ENCODE measurements at regions of chr5 and their contacts with region 1.

Region 1: DNA sequence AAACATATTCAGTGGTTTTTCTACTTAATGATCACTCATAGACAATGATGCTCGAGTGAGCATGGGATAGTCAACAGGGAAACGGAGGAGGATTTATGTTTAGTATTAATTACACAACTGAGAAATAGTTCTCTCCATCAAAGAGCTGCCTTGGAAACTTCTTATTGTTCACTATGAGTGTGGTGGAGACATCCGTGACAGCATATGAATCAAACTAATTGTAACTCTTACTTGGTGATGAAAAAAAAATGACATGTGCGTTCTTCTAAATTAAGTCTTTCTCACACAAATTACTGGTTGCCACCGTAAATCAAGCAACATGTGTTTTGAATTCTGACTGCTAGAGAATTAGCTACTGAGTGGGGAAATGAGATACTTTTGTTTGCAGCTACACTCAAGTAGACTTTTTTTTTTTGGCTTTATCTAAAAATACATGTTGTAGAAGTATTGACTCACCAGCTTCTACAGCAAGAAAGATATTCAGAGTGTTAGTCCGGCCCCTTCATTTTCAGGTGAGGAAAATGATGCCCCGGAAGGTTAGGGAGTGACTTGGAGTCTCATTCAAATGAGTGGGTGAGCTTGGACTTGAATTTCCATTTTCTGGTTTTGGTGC is 179.4 kb downstream of the CFAP90 start:
- DNase-seq: no peak
- H3K4me3 ChIP-seq: no peak overlapping the region
- H3K27ac ChIP-seq: no peak overlapping the region
- H3K4me1 ChIP-seq: no peaks in the 10 kb centered on the region
- H3K27me3 ChIP-seq: no peaks in the 10 kb centered on the region
- CTCF ChIP-seq: no peak
- POLR2A ChIP-seq: no peak

Region 2: GRCh38 chr5:6046296-6046967 is 1625.1 kb before region 1 on chr5:
- intact Hi-C with region 1: loop called (anchors 5 kb)
- DNase-seq: no peak
- H3K4me3 ChIP-seq: no peak overlapping the region
- H3K27ac ChIP-seq: no peak overlapping the region
- H3K4me1 ChIP-seq: no peaks in the 10 kb centered on the region
- H3K27me3 ChIP-seq: no peaks in the 10 kb centered on the region
- CTCF ChIP-seq: no peak
- POLR2A ChIP-seq: no peak

Region 3: DNA sequence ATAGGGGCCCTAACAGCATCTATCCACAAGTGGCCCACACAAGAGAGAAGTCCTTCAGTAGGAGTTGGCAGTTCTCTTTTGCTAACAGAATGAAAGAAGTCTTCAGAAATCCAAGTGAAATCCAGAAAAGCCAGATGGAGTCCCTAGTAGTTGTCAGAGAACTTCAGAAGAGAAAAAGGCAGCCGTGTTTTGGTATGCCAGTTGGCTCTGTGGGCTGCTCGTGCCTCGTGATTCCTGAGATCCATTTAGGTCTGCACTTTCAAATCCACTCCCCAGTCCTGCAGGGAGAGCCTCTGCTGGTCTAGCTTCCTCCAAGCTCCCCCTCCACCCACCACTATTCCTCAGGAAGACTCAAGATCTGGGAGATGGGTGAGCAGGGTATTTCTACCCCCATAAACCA is 110.4 kb after region 1 on chr5:
- intact Hi-C with region 1: no loop called
- DNase-seq: no peak
- H3K4me3 ChIP-seq: no peak overlapping the region
- H3K27ac ChIP-seq: no peak overlapping the region
- H3K4me1 ChIP-seq: no peaks in the 10 kb centered on the region
- H3K27me3 ChIP-seq: no peaks in the 10 kb centered on the region
- CTCF ChIP-seq: no peak
- POLR2A ChIP-seq: no peak